Kidney (tissue), 22 donors: ENCODE measurements at regions of chr19 and their contacts with region 1.

Region 1: DNA sequence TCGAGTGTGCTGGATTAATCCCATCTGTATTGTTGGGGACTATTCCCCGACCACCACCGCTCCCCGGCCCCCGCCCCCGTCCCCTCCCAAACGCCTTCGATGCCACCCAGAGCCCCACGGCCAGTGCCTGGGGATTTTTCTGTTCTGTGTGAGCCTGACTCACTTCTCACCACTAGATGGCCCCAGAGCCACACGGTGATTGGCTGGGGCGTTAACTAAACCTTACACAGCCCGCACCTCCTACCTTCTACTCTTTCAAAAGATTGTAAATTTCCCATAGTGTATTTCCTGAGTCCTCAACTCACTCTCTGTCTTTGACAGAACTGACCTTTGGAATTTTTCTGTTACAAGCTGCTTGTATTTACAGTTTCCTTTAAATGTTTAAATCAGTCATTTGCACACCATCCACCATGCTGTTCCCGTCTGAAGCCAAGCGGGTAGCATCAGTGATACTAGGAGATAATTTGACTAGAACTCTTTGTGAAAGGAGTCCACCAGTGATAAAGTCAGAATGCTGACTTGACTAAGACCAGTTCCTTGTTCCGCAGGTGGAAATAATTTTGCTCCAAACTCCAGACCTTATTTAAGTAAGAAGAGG is 61.4 kb downstream of the RFX2 start:
- DNase-seq: peak in 4 of 5 donors; percentile 81 to 93 (median 86)
- H3K4me3 ChIP-seq: no peak overlapping the region
- H3K27ac ChIP-seq: no peak overlapping the region
- H3K4me1 ChIP-seq: no peaks in the 10 kb centered on the region
- H3K27me3 ChIP-seq: no peaks in the 10 kb centered on the region
- CTCF ChIP-seq: peak; percentile 95

Region 2: GRCh38 chr19:5651361-5651760 is 397.5 kb before region 1 on chr19:
- intact Hi-C with region 1: no loop called
- DNase-seq: no peak
- H3K4me3 ChIP-seq: no peak overlapping the region
- H3K27ac ChIP-seq: no peak overlapping the region
- H3K4me1 ChIP-seq: peaks cover 0 to 4% (median 0%) of the 10 kb centered on the region in 3 donors
- H3K27me3 ChIP-seq: no peaks in the 10 kb centered on the region
- CTCF ChIP-seq: no peak

Region 3: GRCh38 chr19:5727453-5728050 is 321.4 kb before region 1 on chr19:
- intact Hi-C with region 1: no loop called
- DNase-seq: no peak
- H3K4me3 ChIP-seq: no peak overlapping the region
- H3K27ac ChIP-seq: no peak overlapping the region
- H3K4me1 ChIP-seq: no peaks in the 10 kb centered on the region
- H3K27me3 ChIP-seq: no peaks in the 10 kb centered on the region
- CTCF ChIP-seq: no peak

Region 4: GRCh38 chr19:5961969-5962945 is 86.7 kb before region 1 on chr19:
- intact Hi-C with region 1: no loop called
- DNase-seq: peak in 2 of 5 donors; percentile 74 to 75
- H3K4me3 ChIP-seq: no peak overlapping the region
- H3K27ac ChIP-seq: peak overlapping the region; percentile 36 to 59
- H3K4me1 ChIP-seq: peaks cover 0 to 48% (median 24%) of the 10 kb centered on the region in 3 donors
- H3K27me3 ChIP-seq: no peaks in the 10 kb centered on the region
- CTCF ChIP-seq: no peak

Region 5: DNA sequence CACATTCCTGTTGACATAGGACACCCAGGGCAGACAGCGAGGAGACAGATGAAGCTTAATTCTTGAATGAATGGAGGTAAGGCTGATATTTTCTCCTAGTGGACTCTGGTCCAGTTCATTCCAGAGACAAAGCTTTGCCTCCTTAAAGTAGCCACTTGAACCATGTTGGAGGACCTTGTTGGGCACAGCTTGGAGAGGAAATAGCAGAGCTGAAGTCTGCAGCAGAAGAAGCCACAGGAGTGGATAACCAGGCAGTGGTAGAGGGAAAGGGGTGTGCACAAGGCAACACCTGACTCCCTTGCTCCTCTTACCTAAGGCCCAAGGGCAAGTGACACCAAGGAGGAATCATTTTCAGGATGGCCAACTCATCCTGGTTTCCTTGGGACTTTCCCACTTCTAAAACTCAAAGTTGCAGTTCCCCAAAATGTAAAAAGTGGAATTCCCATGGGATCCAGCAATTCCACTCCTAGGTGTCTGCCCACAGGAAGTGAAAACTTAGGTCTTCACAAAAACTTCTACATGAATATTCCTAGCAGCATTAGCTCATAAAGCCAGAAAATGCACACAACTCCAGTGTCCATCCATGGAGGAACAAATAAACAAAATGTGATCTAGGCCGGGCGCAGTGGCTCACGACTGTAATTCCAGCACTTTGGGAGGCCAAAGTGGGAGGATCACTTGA is 68.0 kb after region 1 on chr19:
- intact Hi-C with region 1: loop called (anchors 5 kb)
- DNase-seq: no peak
- H3K4me3 ChIP-seq: no peak overlapping the region
- H3K27ac ChIP-seq: no peak overlapping the region
- H3K4me1 ChIP-seq: no peaks in the 10 kb centered on the region
- H3K27me3 ChIP-seq: no peaks in the 10 kb centered on the region
- CTCF ChIP-seq: no peak

Region 6: GRCh38 chr19:6125571-6125989 is 76.7 kb after region 1 on chr19:
- intact Hi-C with region 1: loop called (anchors 5 kb)
- DNase-seq: peak in 4 of 5 donors; percentile 28 to 62 (median 48)
- H3K4me3 ChIP-seq: no peak overlapping the region
- H3K27ac ChIP-seq: no peak overlapping the region
- H3K4me1 ChIP-seq: no peaks in the 10 kb centered on the region
- H3K27me3 ChIP-seq: no peaks in the 10 kb centered on the region
- CTCF ChIP-seq: peak; percentile 90

Region 7: DNA sequence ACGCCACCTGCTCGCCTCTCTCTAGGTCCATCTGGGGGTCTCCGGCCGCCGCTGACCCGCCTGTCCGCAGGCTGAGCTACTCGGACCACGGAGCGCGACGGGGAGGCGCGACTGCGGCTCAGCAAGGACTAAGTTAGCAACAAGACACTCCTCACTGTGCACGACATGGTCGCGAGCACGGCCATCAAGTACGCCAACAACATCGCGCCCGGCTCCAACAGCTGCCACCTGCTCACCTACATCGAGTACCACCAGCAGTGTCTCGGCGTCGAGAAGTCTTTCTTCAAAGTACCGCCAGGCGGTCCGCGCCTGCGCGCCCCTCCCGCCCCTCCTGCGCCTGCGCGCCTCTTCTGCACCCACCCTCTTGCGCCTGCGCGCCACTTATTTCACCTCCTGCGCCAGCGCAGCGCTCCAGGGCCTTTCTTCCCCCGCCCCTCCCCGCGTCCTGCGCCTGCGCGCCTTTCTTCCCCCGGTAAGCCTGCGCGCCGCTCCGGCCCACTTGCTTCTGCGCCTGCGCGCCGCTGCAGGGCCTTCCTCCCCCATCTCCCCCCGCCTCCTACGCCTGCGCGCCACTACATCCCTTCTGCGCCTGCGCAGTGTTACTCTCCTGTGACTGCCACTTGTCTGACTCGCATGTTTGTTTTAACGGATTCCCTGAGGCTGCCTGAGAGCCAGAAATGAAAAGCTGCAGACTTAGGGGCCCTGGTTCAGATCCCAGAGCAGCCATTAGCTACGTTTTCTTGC is 150.5 kb after region 1 on chr19:
- intact Hi-C with region 1: no loop called
- DNase-seq: peak; percentile 99 to 100 (median 100)
- H3K4me3 ChIP-seq: peak overlapping the region; percentile 86 to 94 (median 89)
- H3K27ac ChIP-seq: no peak overlapping the region
- H3K4me1 ChIP-seq: peaks cover 0 to 11% (median 0%) of the 10 kb centered on the region in 3 donors
- H3K27me3 ChIP-seq: no peaks in the 10 kb centered on the region
- CTCF ChIP-seq: peak; percentile 51